IMR-90 (cell line): ENCODE measurements at regions of chr11 and their contacts with region 1.

Region 1: DNA sequence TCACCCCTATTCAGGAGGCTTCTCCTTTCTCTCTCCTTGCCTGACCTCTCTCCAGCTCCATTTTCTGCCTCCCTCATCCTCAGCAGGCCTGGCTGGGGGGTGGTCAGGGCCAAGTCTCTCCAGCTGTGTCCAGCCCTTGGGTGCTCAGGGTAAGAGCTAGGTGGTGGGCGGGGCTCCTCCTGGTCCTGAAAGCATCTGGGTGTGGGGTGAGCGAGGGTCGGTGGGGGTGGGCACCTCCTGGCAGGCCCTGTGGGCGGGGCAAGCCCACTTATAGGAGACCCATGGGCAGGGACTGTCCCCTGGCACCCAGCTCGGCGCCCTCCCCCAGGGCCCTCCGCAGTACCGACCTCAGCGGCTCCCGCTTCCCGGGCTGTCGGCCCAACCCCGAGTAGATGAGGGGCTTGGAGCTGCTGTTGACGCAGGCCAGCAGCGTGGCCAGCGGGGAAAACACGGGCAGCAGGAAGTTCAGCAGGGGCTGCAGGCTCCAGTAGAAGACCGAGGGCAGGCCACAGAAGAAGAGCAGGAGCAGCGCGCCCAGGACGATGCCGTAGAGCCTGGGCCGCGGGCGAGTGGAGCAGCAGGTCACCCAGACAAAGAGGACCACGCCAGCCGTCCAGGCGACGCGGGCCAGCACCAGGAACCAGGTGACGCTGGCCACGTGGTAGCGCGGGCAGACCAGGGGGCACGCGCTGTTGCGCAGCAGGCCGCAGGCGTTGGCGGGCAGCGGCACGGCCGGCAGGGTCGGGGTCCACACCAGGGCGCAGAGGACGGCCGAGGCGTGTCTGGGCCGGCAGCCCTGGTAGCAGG is 734 bp downstream of the MRGPRG start:
- DNase-seq: no peak
- ATAC-seq: peak; percentile 9; the same call in 1 of the 2 replicates
- H3K4me3 ChIP-seq: no peak overlapping the region
- H3K27ac ChIP-seq: no peak overlapping the region
- H3K4me1 ChIP-seq: no peaks in the 10 kb centered on the region
- H3K27me3 ChIP-seq: peaks cover 65% of the 10 kb centered on the region
- CTCF ChIP-seq: no peak
- POLR2A ChIP-seq: no peak
- RAD21 ChIP-seq: no peak

Region 2: DNA sequence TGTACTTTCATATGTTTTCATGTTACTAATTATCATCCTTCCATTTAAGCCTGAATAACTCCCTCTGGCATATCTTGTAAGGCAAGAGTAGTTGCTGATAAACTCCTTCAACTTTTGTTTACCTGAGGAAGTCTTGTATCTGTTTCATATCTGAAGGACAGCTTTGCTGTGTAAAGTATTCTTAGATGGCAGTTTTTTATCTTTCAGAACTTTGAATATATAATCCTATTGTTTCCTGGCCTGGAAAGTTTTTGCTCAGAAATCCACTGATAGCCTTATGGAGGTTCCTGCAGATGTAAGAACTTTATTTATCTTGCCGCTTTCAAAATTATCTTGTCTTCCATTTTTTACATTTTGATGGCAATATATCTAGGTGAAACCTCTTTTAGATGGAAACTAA is 587.2 kb before region 1 on chr11:
- CTCF ChIA-PET with region 1: no interaction called
- POLR2A ChIA-PET with region 1: no interaction called
- dilution Hi-C with region 1: no loop called
- in situ Hi-C with region 1: no loop called
- intact Hi-C with region 1: no loop called
- DNase-seq: no peak
- ATAC-seq: no peak
- H3K4me3 ChIP-seq: no peak overlapping the region
- H3K27ac ChIP-seq: no peak overlapping the region
- H3K4me1 ChIP-seq: no peaks in the 10 kb centered on the region
- H3K27me3 ChIP-seq: no peaks in the 10 kb centered on the region; the same call in 1 of the 2 replicates
- CTCF ChIP-seq: no peak
- POLR2A ChIP-seq: no peak
- RAD21 ChIP-seq: no peak

Region 3: GRCh38 chr11:3037040-3037944 is 180.6 kb before region 1 on chr11:
- CTCF ChIA-PET with region 1: no interaction called
- POLR2A ChIA-PET with region 1: no interaction called
- dilution Hi-C with region 1: no loop called
- in situ Hi-C with region 1: no loop called
- intact Hi-C with region 1: loop called (anchors 1 kb)
- DNase-seq: peak; percentile 61
- ATAC-seq: peak; percentile 91
- H3K4me3 ChIP-seq: no peak overlapping the region
- H3K27ac ChIP-seq: no peak overlapping the region
- H3K4me1 ChIP-seq: no peaks in the 10 kb centered on the region
- H3K27me3 ChIP-seq: no peaks in the 10 kb centered on the region
- CTCF ChIP-seq: peak; percentile 76
- POLR2A ChIP-seq: no peak
- RAD21 ChIP-seq: peak; percentile 84

Region 4: DNA sequence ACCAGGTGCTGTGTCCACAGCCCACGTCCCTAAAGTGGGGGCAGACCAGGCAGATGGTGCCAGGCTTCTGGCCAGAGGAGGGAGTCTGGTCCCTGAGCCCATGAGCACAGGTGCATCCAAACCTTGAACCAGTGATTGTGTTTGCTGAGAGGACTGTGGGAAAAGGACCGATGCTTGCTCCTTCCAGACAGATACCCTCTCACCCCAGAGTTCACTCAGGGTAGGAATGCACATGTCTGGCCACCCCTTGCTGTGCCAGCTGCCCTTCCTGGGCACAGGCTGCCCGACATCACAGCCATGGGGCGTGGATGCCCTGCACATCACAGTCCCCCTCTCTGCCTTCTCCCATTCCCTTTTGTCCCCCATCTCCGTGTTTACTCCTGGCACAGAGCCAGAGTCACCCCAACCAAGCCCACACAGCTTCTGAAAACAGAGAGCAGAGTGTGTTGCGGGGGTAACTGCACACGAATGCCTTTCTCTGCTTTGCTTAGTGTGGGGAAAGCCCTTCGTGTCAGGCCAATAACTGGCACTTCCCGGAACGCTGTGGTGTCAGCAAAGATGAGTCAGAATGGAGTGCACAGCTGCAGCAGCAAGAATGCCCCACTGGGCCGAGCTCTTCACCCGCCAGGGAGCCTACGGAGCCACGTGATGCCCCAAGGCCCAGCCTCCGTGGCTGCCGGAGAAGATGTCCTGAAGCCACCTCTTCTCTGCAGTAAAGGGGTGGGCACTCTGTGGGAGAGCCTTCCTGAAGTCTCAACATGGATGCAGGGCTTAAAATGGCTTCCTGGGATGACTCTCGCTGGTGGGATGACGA is 168.2 kb before region 1 on chr11:
- CTCF ChIA-PET with region 1: no interaction called
- POLR2A ChIA-PET with region 1: no interaction called
- dilution Hi-C with region 1: no loop called
- in situ Hi-C with region 1: no loop called
- intact Hi-C with region 1: loop called (anchors 5 kb)
- DNase-seq: peak; percentile 98
- ATAC-seq: peak; percentile 92
- H3K4me3 ChIP-seq: no peak overlapping the region
- H3K27ac ChIP-seq: peak overlapping the region; percentile 65
- H3K4me1 ChIP-seq: peaks cover 23% of the 10 kb centered on the region
- H3K27me3 ChIP-seq: no peaks in the 10 kb centered on the region
- CTCF ChIP-seq: peak; percentile 72
- POLR2A ChIP-seq: peak; percentile 21; the same call in 1 of the 2 replicates
- RAD21 ChIP-seq: peak; percentile 74

Region 5: GRCh38 chr11:3091791-3092602 is 125.9 kb before region 1 on chr11:
- CTCF ChIA-PET with region 1: no interaction called
- POLR2A ChIA-PET with region 1: no interaction called
- dilution Hi-C with region 1: no loop called
- in situ Hi-C with region 1: no loop called
- intact Hi-C with region 1: loop called (anchors 1 kb)
- DNase-seq: peak; percentile 44
- ATAC-seq: peak; percentile 64
- H3K4me3 ChIP-seq: no peak overlapping the region
- H3K27ac ChIP-seq: no peak overlapping the region
- H3K4me1 ChIP-seq: peaks cover 9% of the 10 kb centered on the region
- H3K27me3 ChIP-seq: no peaks in the 10 kb centered on the region
- CTCF ChIP-seq: peak; percentile 96
- POLR2A ChIP-seq: no peak
- RAD21 ChIP-seq: peak; percentile 93

Region 6: DNA sequence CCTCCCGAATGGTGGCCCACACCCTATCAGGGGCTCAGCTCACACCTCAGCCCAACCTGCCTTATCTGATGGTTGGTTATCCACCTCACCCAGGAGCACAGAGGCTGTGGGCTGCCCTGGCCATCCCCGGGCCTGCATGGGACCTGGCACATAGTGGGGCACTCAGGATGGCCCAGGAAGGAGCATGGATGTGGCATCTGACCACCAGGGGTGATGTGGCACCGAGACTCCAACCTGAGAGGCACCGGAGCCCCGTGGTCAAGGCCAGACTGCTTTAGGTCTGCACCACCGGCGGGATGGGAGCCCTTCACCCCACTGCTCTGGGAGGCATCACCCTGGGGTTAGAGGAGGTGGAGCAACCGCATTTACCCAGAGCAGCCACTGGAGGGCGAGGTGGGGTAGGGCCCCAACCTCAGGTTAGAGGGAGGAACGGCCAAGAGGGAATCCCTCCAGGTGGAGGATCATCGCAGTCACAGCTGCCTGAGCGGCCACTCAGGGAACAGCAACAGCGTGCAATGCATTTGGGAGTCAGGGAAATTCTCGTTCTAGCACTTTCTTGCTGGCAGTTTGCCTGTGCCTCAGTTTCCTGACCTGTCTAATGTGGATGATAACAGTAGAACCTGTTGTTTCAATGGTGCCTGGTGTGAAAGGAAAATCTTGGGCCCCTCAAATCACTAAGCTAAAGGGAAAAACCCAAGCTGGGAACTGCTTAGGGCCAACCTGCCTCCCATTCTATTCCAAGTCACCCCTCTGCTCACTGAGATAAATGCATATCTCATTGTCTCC is 107.8 kb before region 1 on chr11:
- CTCF ChIA-PET with region 1: no interaction called
- POLR2A ChIA-PET with region 1: no interaction called
- dilution Hi-C with region 1: no loop called
- in situ Hi-C with region 1: no loop called
- intact Hi-C with region 1: loop called (anchors 1 kb)
- DNase-seq: no peak
- ATAC-seq: peak; percentile 80
- H3K4me3 ChIP-seq: no peak overlapping the region
- H3K27ac ChIP-seq: no peak overlapping the region
- H3K4me1 ChIP-seq: peaks cover 2% of the 10 kb centered on the region; the same call in 1 of the 2 replicates
- H3K27me3 ChIP-seq: no peaks in the 10 kb centered on the region
- CTCF ChIP-seq: peak; percentile 63
- POLR2A ChIP-seq: no peak
- RAD21 ChIP-seq: peak; percentile 67